ENCODE measurements at regions of chr9 and their contacts with region 1.

Region 1: DNA sequence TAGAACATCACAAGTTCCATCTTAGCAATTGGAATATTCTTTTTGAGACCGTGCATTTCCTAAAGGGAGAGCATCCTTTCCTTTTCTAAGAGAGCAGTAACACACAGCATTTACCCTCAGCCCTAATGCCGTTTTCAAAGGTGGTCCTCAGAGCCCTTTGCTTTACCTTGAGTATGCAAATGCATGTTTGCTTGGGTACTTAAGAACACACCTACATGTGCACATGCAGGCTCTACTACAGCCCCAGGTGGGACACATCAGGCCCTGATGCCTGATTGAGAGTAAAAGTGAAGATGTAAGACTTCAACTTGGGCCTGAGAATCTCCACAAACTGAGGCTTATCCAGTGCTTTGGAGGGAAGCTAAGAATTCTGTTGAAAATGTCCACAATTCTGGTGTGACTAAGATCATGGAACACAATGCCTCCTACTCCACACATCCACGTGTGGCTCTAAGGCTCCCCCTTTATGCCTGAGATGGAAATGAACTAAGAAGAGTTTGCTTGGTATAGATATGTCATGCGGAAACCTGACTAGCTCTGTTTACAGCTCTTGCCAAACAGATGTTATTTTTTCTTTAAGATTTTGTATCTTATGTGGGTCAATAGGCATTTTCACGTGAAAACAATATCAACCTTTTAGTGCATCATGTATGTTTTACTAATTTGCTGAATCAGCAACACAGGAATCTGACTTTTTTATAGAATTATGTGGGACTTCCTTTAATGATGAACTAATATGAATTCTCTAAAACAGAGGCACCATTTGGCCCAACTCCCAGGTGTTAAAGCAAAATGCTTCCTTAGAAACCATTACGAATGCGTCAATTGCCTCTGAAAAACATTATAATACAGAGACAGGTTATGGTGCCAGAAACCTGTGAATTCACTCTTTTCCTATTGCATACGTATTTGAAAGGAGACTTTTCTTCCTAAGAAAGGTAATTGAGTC is 48.9 kb upstream of the SLC2A8 start:
- DNase-seq: no peak
- ATAC-seq: no peak
- H3K4me3 Mint-ChIP-seq: no peak overlapping the region
- H3K27ac Mint-ChIP-seq: no peak overlapping the region
- H3K4me1 Mint-ChIP-seq: no peaks in the 10 kb centered on the region
- H3K27me3 Mint-ChIP-seq: no peaks in the 10 kb centered on the region
- CTCF ChIP-seq: no peak

Region 2: DNA sequence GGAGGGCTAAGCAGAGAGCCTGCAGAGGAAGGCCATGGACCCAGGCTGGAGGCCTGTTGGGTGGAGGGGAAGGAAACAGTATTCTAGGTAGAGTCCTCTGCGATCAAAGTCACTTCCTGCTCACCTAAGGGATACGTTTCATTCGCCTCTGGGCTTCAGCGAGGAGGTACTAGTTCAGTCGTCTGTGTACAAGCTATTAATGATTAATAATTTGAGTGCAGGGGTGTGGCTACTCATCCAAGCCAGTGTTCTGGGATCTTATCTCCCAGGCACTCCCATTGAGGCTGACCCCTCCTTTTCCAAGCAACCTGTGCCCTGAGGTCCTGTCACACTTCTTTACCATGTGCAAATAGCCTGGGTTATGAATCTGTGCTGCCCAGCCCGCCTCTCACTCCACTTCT is 408.3 kb before region 1 on chr9:
- CTCF ChIA-PET with region 1: no interaction called
- POLR2A ChIA-PET with region 1: no interaction called
- intact Hi-C with region 1: loop called (anchors 5 kb)
- DNase-seq: no peak
- ATAC-seq: no peak
- H3K4me3 Mint-ChIP-seq: no peak overlapping the region
- H3K27ac Mint-ChIP-seq: no peak overlapping the region
- H3K4me1 Mint-ChIP-seq: peaks cover 5% of the 10 kb centered on the region
- H3K27me3 Mint-ChIP-seq: no peaks in the 10 kb centered on the region
- CTCF ChIP-seq: no peak

Region 3: DNA sequence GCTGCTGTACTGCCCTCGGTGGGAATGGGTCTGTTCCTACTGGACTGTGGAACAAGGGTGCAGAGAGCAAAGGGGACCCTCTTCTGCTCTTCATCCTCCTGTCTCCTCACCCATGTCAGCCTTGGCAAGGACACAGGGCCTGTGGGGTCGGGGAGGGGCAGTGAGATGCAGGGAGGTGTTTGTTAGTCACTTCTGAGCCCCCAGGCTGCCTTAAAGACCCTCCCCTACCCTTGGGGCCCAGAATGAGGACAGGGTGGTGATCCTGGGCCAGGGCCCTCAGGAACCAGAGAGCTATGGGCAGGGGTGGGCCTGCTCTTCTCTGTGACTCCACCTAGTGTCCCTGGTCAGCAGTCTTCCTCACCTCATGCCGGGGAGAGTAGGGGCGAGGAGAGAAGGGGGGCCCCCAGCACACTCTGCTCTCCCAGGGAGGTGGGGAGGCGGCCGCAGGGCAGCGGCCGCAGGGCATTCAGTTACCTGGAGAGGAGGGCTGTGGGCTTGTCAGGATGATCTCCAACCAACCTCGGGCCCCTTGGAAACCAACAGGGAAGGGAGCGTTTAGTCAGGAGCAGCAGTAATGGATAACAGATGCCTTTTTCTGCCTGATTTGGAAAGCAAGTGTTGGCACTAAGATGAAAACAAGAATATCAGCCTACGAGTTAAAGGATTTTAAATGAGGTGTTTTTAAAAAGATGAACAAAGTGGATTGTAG is 145.5 kb before region 1 on chr9:
- CTCF ChIA-PET with region 1: no interaction called
- POLR2A ChIA-PET with region 1: no interaction called
- intact Hi-C with region 1: no loop called
- DNase-seq: no peak
- ATAC-seq: no peak
- H3K4me3 Mint-ChIP-seq: no peak overlapping the region
- H3K27ac Mint-ChIP-seq: no peak overlapping the region
- H3K4me1 Mint-ChIP-seq: no peaks in the 10 kb centered on the region
- H3K27me3 Mint-ChIP-seq: no peaks in the 10 kb centered on the region
- CTCF ChIP-seq: no peak

Region 4: GRCh38 chr9:127214421-127215267 is 133.5 kb before region 1 on chr9:
- CTCF ChIA-PET with region 1: interaction called, 8 read pairs
- POLR2A ChIA-PET with region 1: no interaction called
- intact Hi-C with region 1: loop called (anchors 1 kb)
- DNase-seq: no peak
- ATAC-seq: peak; percentile 86
- H3K4me3 Mint-ChIP-seq: no peak overlapping the region
- H3K27ac Mint-ChIP-seq: no peak overlapping the region
- H3K4me1 Mint-ChIP-seq: peaks cover 4% of the 10 kb centered on the region
- H3K27me3 Mint-ChIP-seq: no peaks in the 10 kb centered on the region
- CTCF ChIP-seq: peak; percentile 17

Region 5: DNA sequence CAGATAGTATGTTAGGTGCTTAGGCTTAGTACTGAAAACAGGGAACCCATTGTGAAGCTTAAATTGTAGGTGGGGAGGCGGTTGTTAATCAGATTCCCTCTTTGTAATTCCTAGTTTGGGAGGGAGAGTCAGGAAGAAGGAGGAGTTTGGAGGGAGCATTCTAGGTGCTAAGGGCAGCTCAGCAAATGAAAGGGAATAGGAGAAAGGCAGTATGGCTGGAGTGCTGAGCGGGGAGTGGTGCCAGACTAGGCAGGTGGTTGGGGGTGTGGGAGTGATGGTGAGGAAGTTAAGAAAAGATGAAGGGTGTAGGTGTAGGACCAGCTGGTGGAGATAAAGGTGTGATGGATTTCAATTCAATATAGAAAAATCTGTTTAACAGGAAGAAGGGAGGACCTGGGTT is 94.7 kb before region 1 on chr9:
- CTCF ChIA-PET with region 1: no interaction called
- POLR2A ChIA-PET with region 1: no interaction called
- intact Hi-C with region 1: no loop called
- DNase-seq: no peak
- ATAC-seq: no peak
- H3K4me3 Mint-ChIP-seq: no peak overlapping the region
- H3K27ac Mint-ChIP-seq: no peak overlapping the region
- H3K4me1 Mint-ChIP-seq: no peaks in the 10 kb centered on the region
- H3K27me3 Mint-ChIP-seq: no peaks in the 10 kb centered on the region
- CTCF ChIP-seq: no peak

Region 6: DNA sequence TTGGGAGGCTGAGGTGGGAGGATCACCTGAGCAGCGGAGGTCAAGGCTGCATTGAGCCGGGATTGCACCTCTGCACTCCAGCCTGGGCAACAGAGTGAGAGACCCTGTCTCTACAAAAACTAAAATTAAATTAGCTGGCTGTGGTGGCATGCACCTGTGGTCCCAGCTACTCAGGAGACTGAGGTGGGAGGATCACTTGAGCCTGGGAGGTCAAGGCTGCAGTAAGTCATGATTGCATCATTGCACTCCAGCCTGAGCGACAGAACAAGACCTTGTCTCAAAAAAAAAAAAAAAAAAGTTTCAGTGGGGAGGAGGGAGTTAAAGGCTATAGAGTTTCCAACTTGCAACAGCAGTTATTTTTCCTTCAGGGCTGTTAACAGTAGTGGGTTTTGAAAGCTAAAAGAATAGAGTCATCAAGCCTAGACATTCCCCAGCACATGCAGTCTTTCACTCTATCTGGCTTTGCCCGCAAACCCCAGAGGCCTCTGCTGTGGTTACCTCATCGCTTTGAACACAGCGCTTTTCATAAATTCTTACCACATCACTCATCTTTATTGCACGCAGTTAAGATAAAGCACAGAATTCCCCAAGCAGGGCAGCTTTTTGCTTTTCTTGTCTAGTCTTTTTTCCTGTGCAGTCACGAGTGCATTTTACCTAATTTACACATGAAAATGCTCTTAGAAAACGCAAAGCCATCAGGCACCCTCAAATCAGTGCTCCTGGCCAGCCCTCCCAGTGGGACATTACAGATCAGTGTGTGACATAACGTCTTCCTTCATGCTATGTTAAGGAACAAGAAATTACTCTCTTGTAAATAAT is 40.1 kb after region 1 on chr9:
- CTCF ChIA-PET with region 1: no interaction called
- POLR2A ChIA-PET with region 1: no interaction called
- intact Hi-C with region 1: no loop called
- DNase-seq: no peak
- ATAC-seq: peak; percentile 86
- H3K4me3 Mint-ChIP-seq: no peak overlapping the region
- H3K27ac Mint-ChIP-seq: no peak overlapping the region
- H3K4me1 Mint-ChIP-seq: peaks cover 9% of the 10 kb centered on the region
- H3K27me3 Mint-ChIP-seq: peaks cover 10% of the 10 kb centered on the region
- CTCF ChIP-seq: no peak